Heart right ventricle (tissue), 16 donors: ENCODE measurements at regions of chr16 and their contacts with region 1.

Region 1: GRCh38 chr16:10045291-10045775 is 136.9 kb downstream of the GRIN2A start:
- DNase-seq: no peak
- ATAC-seq: no peak
- H3K4me3 ChIP-seq: no peak overlapping the region
- H3K27ac ChIP-seq: no peak overlapping the region
- H3K4me1 ChIP-seq: no peaks in the 10 kb centered on the region
- H3K27me3 ChIP-seq: peaks cover 0 to 24% (median 13%) of the 10 kb centered on the region in 7 donors
- CTCF ChIP-seq: no peak

Region 2: GRCh38 chr16:10114409-10114808 is 69.1 kb after region 1 on chr16:
- intact Hi-C with region 1: loop called in 1 of 10 experiments (anchors 10 kb)
- DNase-seq: no peak
- ATAC-seq: no peak
- H3K4me3 ChIP-seq: no peak overlapping the region
- H3K27ac ChIP-seq: no peak overlapping the region
- H3K4me1 ChIP-seq: no peaks in the 10 kb centered on the region
- H3K27me3 ChIP-seq: peaks cover 0 to 5% (median 0%) of the 10 kb centered on the region in 7 donors
- CTCF ChIP-seq: no peak